Caco-2 (cell line): ENCODE measurements at regions of chr15 and their contacts with region 1.

Region 1: DNA sequence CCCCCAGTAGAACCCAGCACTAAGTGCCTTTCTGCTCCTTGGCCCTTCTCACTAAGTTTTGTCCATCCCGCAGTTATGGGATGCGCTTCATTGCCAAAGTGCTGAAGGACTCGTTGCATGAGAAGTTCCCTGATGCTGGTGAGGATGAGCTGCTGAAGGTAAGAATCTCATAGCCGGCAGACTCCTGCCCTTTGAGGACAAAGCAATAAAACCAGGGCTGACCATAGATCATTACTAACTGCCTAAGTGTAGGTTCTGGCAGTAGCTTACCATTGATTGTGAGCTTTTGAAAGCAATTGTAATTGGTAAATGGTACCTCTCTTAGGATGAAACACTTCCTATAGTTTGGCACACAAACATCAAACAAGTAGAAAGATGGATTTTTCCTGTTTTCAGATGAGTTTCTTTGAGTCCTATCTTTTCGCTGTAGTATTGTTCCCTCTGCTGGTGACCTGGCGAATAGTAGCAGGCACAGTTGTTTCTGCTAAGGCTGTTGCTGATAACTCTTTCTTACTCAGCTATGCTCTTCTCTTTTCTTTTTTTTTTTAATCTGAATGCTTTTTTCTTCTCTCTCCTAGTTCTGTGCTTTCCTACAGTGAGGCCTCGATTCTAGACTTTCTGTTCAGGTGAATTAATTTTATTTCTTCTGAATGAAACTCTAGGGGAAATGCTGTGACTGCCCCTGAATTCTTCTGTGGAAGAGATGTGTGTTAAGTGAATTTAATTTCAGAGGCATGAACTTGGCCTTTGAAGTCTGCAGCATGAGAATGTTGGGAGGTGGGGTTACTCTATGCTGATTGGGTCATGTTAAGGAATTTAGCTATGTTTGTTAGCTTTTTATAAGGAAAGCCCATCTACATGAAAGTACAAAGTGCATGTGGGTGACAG is 47.4 kb upstream of the CRTC3 start:
- DNase-seq: peak; percentile 50 to 62
- H3K4me3 ChIP-seq: no peak overlapping the region
- H3K4me3 Mint-ChIP-seq: no peak overlapping the region
- H3K27ac Mint-ChIP-seq: no peak overlapping the region
- H3K4me1 ChIP-seq: peaks cover 29% of the 10 kb centered on the region
- H3K4me1 Mint-ChIP-seq: peaks cover 34% of the 10 kb centered on the region
- H3K27me3 ChIP-seq: no peaks in the 10 kb centered on the region
- H3K27me3 Mint-ChIP-seq: no peaks in the 10 kb centered on the region
- CTCF ChIP-seq: peak; percentile 80 to 82

Region 2: DNA sequence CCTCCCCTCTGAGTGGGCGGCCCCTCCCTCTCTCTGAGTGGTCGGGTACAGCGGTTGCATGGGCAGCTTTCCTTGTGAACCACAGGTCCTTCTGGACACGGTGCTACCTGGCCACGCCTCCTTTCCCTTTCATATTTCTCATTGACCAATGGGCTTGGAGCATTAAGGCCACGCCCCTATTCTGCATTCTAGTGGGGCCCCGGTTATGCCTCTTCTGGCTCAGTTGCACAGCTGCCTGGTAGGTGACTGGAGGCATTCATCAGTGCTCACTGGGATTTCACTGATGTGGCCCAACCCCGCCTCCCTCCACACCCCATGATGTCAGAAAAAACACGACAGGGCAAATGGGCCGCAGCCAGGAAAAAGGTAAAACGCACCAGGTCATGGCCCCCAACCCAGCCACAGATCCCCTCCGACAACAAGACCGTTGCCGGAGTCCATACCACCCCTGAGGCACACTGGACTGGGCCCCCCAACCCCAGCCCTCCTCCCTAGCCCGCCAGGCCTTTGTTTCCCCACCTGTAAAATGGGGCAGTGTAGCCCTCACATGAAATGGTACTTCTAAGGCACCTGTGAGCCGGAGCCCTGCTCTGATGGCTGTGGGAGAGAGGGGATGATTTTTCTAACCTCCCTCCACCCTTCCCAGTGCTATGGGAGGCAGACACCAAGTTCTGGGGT is 190.6 kb before region 1 on chr15:
- CTCF ChIA-PET with region 1: interaction called, 20 read pairs
- POLR2A ChIA-PET with region 1: no interaction called
- intact Hi-C with region 1: loop called (anchors 1 kb)
- DNase-seq: peak; percentile 58 to 74
- H3K4me3 ChIP-seq: no peak overlapping the region
- H3K4me3 Mint-ChIP-seq: no peak overlapping the region
- H3K27ac Mint-ChIP-seq: no peak overlapping the region
- H3K4me1 ChIP-seq: peaks cover 4% of the 10 kb centered on the region; the same call in 1 of the 2 replicates
- H3K4me1 Mint-ChIP-seq: peaks cover 7% of the 10 kb centered on the region
- H3K27me3 ChIP-seq: no peaks in the 10 kb centered on the region
- H3K27me3 Mint-ChIP-seq: no peaks in the 10 kb centered on the region
- CTCF ChIP-seq: no peak

Region 3: DNA sequence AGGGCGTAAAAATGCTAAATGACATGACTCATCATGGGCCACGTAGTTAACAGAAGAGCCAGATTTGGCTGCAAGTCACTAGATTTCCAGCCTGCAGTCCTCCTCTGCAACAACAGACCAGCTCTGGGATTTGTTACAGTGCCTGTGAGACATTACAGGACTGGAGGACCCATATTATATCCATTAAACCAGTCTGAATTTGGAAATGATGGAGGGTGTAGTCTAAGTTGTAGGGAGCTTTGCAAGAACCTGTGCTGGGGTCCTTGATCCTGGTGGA is 119.5 kb before region 1 on chr15:
- CTCF ChIA-PET with region 1: interaction called, 6 read pairs
- POLR2A ChIA-PET with region 1: interaction called, 8 read pairs
- intact Hi-C with region 1: loop called (anchors 1 kb)
- DNase-seq: no peak
- H3K4me3 ChIP-seq: no peak overlapping the region
- H3K4me3 Mint-ChIP-seq: no peak overlapping the region
- H3K27ac Mint-ChIP-seq: no peak overlapping the region
- H3K4me1 ChIP-seq: peaks cover 34% of the 10 kb centered on the region
- H3K4me1 Mint-ChIP-seq: peaks cover 20% of the 10 kb centered on the region
- H3K27me3 ChIP-seq: no peaks in the 10 kb centered on the region
- H3K27me3 Mint-ChIP-seq: no peaks in the 10 kb centered on the region
- CTCF ChIP-seq: no peak

Region 4: GRCh38 chr15:90545095-90545494 is 62.7 kb after region 1 on chr15:
- CTCF ChIA-PET with region 1: no interaction called
- POLR2A ChIA-PET with region 1: no interaction called
- intact Hi-C with region 1: no loop called
- DNase-seq: no peak
- H3K4me3 ChIP-seq: no peak overlapping the region
- H3K4me3 Mint-ChIP-seq: no peak overlapping the region
- H3K27ac Mint-ChIP-seq: no peak overlapping the region
- H3K4me1 ChIP-seq: no peaks in the 10 kb centered on the region
- H3K4me1 Mint-ChIP-seq: peaks cover 7% of the 10 kb centered on the region
- H3K27me3 ChIP-seq: no peaks in the 10 kb centered on the region
- H3K27me3 Mint-ChIP-seq: no peaks in the 10 kb centered on the region
- CTCF ChIP-seq: no peak